ENCODE measurements at regions of chr6 and their contacts with region 1.

Region 1: DNA sequence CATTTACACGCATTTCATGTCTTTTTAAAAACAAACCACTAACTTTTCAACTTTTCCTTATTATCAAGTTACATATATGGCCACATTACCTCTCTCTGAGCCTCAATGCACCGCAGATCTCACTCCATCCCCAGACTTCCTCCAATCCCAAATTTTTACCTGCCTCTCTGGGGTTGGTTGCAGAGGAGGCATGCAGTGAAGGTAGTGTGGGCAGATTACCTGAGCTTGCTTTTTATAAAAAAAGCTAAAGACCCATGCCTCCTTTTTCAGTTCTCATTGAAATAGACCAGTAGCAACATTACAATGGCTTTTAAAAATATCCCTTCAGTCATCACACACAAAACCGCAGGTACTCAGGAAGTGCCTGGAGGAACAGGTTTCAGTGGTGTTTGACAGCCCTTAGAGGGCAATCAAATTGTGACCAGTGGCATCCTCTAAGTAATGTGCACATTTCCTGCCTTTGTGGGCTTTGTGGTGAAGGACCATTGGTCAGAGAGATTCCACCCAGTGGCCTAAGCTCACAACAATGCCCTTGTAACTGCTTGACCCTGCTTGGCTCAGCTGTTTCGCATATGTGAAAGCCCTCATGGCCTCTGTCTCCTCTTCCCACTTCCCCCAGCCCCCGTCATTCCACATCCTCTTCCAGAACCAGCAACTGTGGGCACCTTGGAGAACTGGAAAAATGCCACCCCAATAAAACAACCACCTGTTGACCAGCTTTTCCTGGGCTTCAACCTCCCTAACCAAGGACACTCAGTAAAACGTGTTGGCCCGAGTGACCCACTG is 30.2 kb upstream of the IL17A start:
- DNase-seq: peak; percentile 20
- H3K4me3 Mint-ChIP-seq: no peak overlapping the region
- H3K27ac Mint-ChIP-seq: peak overlapping the region; percentile 89
- H3K4me1 Mint-ChIP-seq: peaks cover 50% of the 10 kb centered on the region
- H3K27me3 Mint-ChIP-seq: peaks cover 20% of the 10 kb centered on the region

Region 2: DNA sequence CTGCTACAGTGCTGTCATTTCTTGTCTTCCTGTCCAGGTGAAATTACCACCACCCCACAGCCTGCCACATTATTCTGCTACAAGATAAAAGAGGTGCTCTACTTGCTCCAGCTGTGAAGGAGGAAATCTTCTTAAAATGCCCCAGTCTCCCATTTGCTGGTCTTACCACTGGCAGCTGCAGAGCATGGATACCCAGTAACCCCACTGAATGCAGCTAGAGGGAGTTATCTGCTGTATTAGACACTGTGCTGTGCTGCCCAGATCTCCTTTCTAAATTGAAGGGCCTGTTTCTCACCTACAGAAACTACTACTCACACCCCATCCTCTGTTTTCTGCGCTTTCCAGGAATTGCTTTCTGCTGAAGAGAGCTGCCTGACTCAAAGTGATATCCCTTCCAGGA is 586.4 kb before region 1 on chr6:
- CTCF ChIA-PET with region 1: no interaction called
- POLR2A ChIA-PET with region 1: no interaction called
- intact Hi-C with region 1: no loop called
- DNase-seq: no peak
- H3K4me3 Mint-ChIP-seq: no peak overlapping the region
- H3K27ac Mint-ChIP-seq: no peak overlapping the region
- H3K4me1 Mint-ChIP-seq: no peaks in the 10 kb centered on the region
- H3K27me3 Mint-ChIP-seq: no peaks in the 10 kb centered on the region

Region 3: DNA sequence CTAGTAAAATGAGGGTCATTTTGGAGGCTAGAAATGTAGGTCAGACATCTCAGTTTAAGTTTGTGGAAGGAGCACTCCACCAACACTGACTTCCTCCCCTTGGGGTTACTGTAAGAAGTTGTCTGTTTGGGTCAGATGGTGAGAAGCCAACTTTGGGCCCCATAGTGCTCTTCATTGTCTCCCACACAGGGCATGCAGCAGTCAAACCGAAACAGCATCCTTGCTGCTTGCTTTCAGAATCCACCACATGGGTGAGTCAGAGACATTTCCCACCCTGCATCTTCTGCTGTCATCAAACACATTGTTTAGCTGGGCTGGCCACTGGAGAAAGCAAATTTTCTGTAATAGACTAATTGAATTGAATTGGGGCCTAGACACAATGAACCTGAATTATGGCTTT is 71.5 kb after region 1 on chr6:
- CTCF ChIA-PET with region 1: no interaction called
- POLR2A ChIA-PET with region 1: no interaction called
- intact Hi-C with region 1: loop called (anchors 1 kb)
- DNase-seq: peak; percentile 90
- H3K4me3 Mint-ChIP-seq: no peak overlapping the region
- H3K27ac Mint-ChIP-seq: no peak overlapping the region
- H3K4me1 Mint-ChIP-seq: peaks cover 20% of the 10 kb centered on the region
- H3K27me3 Mint-ChIP-seq: peaks cover 39% of the 10 kb centered on the region

Region 4: DNA sequence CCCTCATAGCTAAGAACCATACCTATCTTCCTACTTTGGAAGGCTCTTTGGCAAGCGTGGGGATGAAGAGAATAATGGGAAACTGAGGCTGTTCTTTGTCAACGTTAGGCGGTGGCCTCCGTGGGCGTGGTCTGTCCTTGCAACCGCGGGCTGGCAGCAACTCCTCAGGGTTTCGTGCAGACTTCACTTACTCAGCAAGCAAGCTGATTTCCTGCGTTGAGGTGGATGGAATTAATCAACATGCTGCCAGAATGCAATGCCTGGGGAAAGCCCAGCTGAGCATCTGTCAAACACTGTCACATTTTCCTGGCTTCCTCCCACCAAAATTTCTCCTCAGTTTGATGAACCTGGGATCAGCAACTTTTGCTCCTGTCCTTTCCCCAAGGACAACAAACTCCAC is 97.5 kb after region 1 on chr6:
- CTCF ChIA-PET with region 1: interaction called, 6 read pairs
- POLR2A ChIA-PET with region 1: interaction called, 4 read pairs
- intact Hi-C with region 1: loop called (anchors 1 kb)
- DNase-seq: peak; percentile 73
- H3K4me3 Mint-ChIP-seq: no peak overlapping the region
- H3K27ac Mint-ChIP-seq: no peak overlapping the region
- H3K4me1 Mint-ChIP-seq: peaks cover 41% of the 10 kb centered on the region
- H3K27me3 Mint-ChIP-seq: peaks cover 44% of the 10 kb centered on the region

Region 5: GRCh38 chr6:52577022-52577777 is 421.2 kb after region 1 on chr6 and contains the start of gene TRAM2:
- CTCF ChIA-PET with region 1: no interaction called
- POLR2A ChIA-PET with region 1: no interaction called
- intact Hi-C with region 1: loop called (anchors 5 kb)
- DNase-seq: peak; percentile 70
- H3K4me3 Mint-ChIP-seq: peak within 1 kb of the TSS; percentile 77
- H3K27ac Mint-ChIP-seq: peak within 1 kb of the TSS; percentile 59
- H3K4me1 Mint-ChIP-seq: peaks cover 29% of the 10 kb centered on the region
- H3K27me3 Mint-ChIP-seq: no peaks in the 10 kb centered on the region
- total RNA-seq, gene TRAM2: 2.4 to 2.6 TPM